Mucosa of descending colon (tissue), 3 donors: ENCODE measurements at regions of chr19 and their contacts with region 1.

Region 1: DNA sequence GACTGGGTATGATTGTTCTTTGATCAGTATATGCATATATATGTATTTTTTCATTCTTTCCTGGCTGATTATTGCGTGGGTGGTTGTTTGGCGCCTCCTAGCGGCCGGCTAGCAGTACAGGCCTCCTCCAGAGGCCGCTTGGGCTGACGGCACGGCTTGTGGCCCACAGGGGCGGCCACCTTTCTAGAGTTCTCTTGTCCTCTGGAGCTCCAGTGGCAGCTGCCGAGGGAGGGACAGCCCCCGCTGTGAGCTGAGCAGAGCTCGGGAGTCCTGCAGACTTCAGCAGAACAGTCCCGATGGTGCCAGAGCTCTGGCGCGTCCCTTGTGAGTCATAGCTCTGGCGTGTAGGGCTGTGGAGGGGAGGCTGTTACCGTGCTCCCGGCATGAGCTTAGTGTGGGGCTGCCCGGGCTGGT is 22.5 kb upstream of the ZNF429 start:
- DNase-seq: peak; percentile 32 to 77 (median 58)
- ATAC-seq: peak; percentile 85
- H3K4me3 ChIP-seq: no peak overlapping the region
- H3K4me1 ChIP-seq: no peaks in the 10 kb centered on the region
- CTCF ChIP-seq: peak; percentile 82

Region 2: DNA sequence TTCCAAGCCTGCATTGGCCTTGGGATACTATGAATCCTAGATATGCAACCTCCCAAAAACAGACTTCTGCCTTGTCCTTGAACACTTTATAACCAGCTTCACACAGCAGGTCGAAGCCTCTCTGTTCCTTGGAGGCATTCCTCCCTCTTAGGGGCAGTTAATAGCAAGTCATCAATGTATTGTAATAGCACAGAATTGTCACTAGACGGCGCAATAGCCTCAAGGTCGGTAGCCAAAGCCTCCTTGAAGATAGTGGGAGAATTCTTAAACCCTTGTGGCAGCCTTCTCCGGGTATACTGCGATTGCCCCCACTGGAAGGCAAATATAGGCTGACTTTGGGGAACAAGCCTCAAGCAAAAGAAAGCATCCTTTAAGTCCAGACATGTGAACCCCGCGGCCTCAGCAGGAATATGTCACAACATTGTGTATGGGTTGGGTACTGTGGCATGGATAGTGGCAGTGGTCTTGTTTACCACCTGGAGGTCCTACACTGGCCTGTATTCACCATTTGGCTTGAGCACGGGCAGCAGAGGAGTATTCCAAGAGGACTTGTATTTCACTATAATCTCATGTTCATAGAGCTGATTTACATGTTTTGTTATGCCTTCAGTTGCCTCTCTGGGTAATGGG is 279.9 kb before region 1 on chr19:
- intact Hi-C with region 1: loop called in 1 of 2 experiments (anchors 5 kb)
- DNase-seq: peak in 1 of 3 donors; percentile 28
- ATAC-seq: peak; percentile 56
- H3K4me3 ChIP-seq: no peak overlapping the region
- H3K4me1 ChIP-seq: no peaks in the 10 kb centered on the region
- CTCF ChIP-seq: peak; percentile 55

Region 3: DNA sequence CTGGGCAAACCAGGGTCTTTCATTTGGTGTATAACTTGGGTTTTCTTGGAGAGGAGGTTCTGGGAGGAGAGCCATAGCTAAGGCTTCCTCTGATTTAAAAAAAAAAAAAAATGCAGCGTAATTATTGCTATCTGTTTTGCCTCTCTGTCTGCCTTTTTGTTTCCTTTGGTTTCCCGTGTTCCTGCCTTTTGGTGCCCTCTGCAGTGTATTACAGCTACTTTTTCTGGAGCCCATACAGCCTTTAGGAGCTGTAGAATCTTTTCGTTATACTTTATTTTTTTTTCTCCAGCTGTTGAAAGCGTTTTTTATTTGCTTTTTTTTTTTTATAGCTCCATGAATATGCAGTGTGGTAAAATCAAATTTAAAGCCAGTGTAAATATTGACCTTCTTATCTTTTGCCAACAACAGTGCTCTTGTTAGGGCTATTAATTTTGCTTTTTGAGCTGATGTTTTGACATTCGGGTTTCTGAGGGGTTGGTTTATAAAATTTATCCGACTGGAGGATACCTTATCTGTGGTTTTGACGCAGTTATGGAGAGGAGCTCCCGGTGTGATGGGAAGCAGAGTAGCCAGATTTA is 47.8 kb before region 1 on chr19:
- intact Hi-C with region 1: no loop called
- DNase-seq: no peak
- ATAC-seq: no peak
- H3K4me3 ChIP-seq: no peak overlapping the region
- H3K4me1 ChIP-seq: no peaks in the 10 kb centered on the region
- CTCF ChIP-seq: no peak